ENCODE measurements at regions of chr2 and their contacts with region 1.

Region 1: DNA sequence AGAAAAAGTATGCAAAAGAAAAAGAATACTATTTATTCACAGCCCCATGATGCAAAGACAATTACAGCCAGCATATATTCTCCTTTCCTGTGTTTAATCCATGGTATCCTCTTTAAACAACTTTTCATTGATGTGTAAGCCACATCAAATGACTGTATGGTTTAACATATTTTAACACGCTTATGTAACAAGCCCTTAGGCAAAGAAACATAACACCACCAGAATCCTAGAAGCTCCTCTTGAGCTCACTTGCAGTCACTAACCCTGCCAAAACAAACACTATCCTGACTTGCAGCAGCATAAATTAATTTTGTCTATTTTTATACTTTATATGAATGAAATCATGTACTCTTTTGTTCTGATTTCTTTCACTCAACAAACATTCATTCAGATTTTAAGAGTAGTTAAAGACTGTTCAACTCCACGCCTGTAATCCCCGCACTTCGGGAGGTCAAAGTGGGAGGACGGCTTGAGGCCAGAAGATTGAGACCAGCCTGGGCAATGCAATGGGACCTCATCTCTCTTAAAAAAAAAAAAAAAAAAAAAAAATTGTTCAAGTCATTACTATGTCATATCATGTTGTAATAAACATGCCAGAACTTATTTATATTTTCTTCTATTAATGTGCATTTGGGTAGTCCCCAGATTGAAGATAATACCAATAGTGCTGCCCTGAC is 226.3 kb downstream of the NBAS start:
- DNase-seq: no peak
- H3K4me3 ChIP-seq: no peak overlapping the region
- H3K27ac ChIP-seq: no peak overlapping the region
- H3K4me1 ChIP-seq: peaks cover 8% of the 10 kb centered on the region
- H3K27me3 ChIP-seq: no peaks in the 10 kb centered on the region
- CTCF ChIP-seq: no peak
- POLR2A ChIP-seq: no peak

Region 2: DNA sequence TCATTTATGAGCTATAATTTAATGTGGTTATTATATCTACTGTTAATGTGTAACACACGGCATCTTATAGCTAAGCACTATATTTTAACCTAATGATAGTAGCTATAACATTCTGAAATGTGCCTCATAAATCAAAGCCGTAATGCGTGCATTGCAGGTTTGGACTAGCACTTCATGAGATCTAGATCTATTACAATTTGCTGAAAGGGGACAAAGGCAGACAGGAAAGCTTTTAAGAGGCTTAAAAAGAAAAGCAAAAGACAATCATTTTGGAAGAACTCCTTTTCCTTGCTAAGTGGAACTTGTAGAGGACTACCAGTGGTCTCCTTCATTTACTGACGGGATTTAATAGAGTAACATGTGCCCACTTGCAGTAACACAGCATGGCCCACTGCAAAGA is 13.3 kb after region 1 on chr2:
- CTCF ChIA-PET with region 1: interaction called, 4 read pairs
- POLR2A ChIA-PET with region 1: no interaction called
- dilution Hi-C with region 1: no loop called
- intact Hi-C with region 1: loop called (anchors 2 kb)
- DNase-seq: no peak
- H3K4me3 ChIP-seq: no peak overlapping the region
- H3K27ac ChIP-seq: no peak overlapping the region
- H3K4me1 ChIP-seq: no peaks in the 10 kb centered on the region
- H3K27me3 ChIP-seq: no peaks in the 10 kb centered on the region
- CTCF ChIP-seq: no peak
- POLR2A ChIP-seq: no peak

Region 3: GRCh38 chr2:15826273-15826717 is 491.5 kb after region 1 on chr2:
- CTCF ChIA-PET with region 1: no interaction called
- POLR2A ChIA-PET with region 1: no interaction called
- dilution Hi-C with region 1: no loop called
- intact Hi-C with region 1: no loop called
- DNase-seq: no peak
- H3K4me3 ChIP-seq: no peak overlapping the region
- H3K27ac ChIP-seq: no peak overlapping the region
- H3K4me1 ChIP-seq: no peaks in the 10 kb centered on the region
- H3K27me3 ChIP-seq: no peaks in the 10 kb centered on the region
- CTCF ChIP-seq: no peak
- POLR2A ChIP-seq: no peak

Measured in endothelial cell of umbilical vein (primary cell).